CD8-positive, alpha-beta memory T cell (primary cell): ENCODE measurements at regions of chr1 and their contacts with region 1.

Region 1: DNA sequence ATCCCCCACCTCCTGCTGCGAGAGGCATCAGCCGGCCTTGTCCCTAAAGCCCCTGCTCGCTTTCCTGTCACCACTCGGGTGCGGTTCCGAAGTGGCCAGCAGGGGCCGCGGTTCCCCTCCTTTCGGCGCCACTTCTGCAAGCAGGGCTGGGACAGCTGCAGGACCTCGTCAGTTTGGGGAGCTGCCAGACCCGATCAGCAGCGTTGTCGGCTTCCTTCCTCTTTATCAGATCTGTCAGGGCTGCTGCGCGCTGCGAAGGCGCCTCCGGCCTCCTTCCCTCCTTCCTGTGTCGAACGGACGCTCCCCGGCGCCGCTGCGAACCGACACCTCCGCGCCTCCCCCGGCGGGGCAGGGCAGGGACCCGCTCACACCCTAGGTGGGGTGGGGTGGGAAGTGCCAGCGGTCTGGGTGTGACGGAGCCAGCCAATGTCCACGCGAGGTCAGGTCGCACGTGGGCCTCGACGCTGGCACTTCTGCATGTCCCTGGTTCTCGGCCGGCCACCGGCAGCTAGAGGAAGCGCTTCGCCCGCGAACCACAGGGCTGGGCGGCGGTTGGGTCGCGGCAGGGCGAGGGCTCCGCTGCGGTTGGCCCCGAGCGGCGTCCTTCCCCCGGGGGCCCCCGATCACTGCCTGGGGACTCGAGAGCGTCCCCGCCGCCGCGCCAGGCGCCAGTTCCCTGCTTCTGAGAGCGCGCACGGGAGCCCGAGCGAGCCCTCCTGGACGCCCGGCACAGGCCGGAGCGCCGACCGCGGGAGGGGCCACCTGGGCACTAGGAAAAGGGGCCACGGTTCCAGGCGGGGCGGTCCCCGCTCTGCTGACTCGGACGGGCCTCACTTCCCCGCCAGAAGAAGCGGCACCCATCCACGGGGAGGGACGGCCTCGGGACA is 81.8 kb downstream of the RUNX3 start:
- DNase-seq: peak; percentile 82 to 95 (median 86)
- H3K4me3 ChIP-seq: peak overlapping the region; percentile 48
- H3K4me3 Mint-ChIP-seq: peak overlapping the region; percentile 66 to 84 (median 74)
- H3K27ac ChIP-seq: peak overlapping the region; percentile 27
- H3K27ac Mint-ChIP-seq: peak overlapping the region; percentile 73 to 95 (median 82)
- H3K4me1 ChIP-seq: peaks cover 4% of the 10 kb centered on the region
- H3K4me1 Mint-ChIP-seq: peaks cover 24 to 37% (median 25%) of the 10 kb centered on the region in 3 donors
- H3K27me3 ChIP-seq: no peaks in the 10 kb centered on the region
- H3K27me3 Mint-ChIP-seq: peaks cover 0 to 1% of the 10 kb centered on the region in 2 donors

Region 2: GRCh38 chr1:24897767-24898483 is 49.7 kb after region 1 on chr1:
- CTCF ChIA-PET with region 1: interaction called, 30 read pairs
- POLR2A ChIA-PET with region 1: no interaction called
- DNase-seq: peak in 3 of 5 donors; percentile 36 to 60 (median 43)
- H3K4me3 ChIP-seq: no peak overlapping the region
- H3K4me3 Mint-ChIP-seq: peak overlapping the region in 4 of 7 donors; percentile 28 to 68 (median 56)
- H3K27ac ChIP-seq: no peak overlapping the region
- H3K27ac Mint-ChIP-seq: peak overlapping the region; percentile 53 to 94 (median 87)
- H3K4me1 ChIP-seq: peaks cover 30% of the 10 kb centered on the region
- H3K4me1 Mint-ChIP-seq: peaks cover 44 to 60% (median 47%) of the 10 kb centered on the region in 3 donors
- H3K27me3 ChIP-seq: no peaks in the 10 kb centered on the region
- H3K27me3 Mint-ChIP-seq: peaks cover 0 to 4% of the 10 kb centered on the region in 2 donors

Region 3: DNA sequence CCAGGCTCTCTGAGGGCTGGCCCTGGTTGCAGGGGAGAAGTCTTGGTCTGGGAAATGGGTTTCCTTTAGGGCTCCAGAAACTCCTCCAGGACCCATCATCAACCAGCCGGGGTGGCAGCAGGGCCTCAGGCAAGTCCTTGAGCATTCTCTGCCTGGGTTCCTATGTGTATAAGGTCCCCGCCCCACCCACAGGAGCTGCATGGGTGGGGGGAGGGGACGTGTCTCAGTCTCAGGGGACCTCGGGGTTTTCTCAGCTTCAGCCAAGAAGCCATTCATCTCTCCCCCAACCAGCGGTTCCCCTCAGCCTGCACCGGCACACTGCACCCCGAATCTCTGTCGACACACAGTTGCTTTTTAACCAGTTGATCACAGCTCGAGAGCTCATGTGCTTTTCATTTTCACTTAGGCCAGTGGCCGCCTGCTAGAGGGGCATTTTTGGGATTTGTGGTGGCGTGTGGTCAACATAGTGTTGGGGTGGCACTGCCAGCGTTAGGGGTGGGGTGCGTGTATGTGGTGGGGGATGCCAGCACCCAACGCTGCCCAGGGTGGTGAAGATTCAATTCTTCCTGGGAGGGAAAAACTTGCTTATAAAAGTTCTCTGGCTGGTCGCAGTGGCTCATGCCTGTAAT is 75.4 kb after region 1 on chr1:
- CTCF ChIA-PET with region 1: interaction called, 98 read pairs
- POLR2A ChIA-PET with region 1: interaction called, 12 read pairs
- DNase-seq: peak in 2 of 5 donors; percentile 57 to 61
- H3K4me3 ChIP-seq: peak overlapping the region; percentile 25
- H3K4me3 Mint-ChIP-seq: peak overlapping the region; percentile 79 to 99 (median 91)
- H3K27ac ChIP-seq: peak overlapping the region; percentile 64
- H3K27ac Mint-ChIP-seq: peak overlapping the region; percentile 85 to 100 (median 100)
- H3K4me1 ChIP-seq: peaks cover 91% of the 10 kb centered on the region
- H3K4me1 Mint-ChIP-seq: peaks cover 70 to 87% (median 87%) of the 10 kb centered on the region in 3 donors
- H3K27me3 ChIP-seq: no peaks in the 10 kb centered on the region
- H3K27me3 Mint-ChIP-seq: peaks cover 0 to 11% of the 10 kb centered on the region in 2 donors

Region 4: GRCh38 chr1:25099343-25099951 is 251.2 kb after region 1 on chr1:
- CTCF ChIA-PET with region 1: interaction called, 59 read pairs
- POLR2A ChIA-PET with region 1: interaction called, 5 read pairs
- DNase-seq: peak; percentile 22 to 78 (median 44)
- H3K4me3 ChIP-seq: peak overlapping the region; percentile 30
- H3K4me3 Mint-ChIP-seq: peak overlapping the region; percentile 34 to 89 (median 76)
- H3K27ac ChIP-seq: peak overlapping the region; percentile 0
- H3K27ac Mint-ChIP-seq: peak overlapping the region; percentile 25 to 95 (median 90)
- H3K4me1 ChIP-seq: peaks cover 71% of the 10 kb centered on the region
- H3K4me1 Mint-ChIP-seq: peaks cover 71 to 78% (median 75%) of the 10 kb centered on the region in 3 donors
- H3K27me3 ChIP-seq: no peaks in the 10 kb centered on the region
- H3K27me3 Mint-ChIP-seq: no peaks in the 10 kb centered on the region

Region 5: GRCh38 chr1:25198663-25199252 is 350.5 kb after region 1 on chr1:
- CTCF ChIA-PET with region 1: interaction called, 54 read pairs
- POLR2A ChIA-PET with region 1: no interaction called
- DNase-seq: peak in 1 of 5 donors; percentile 18
- H3K4me3 ChIP-seq: no peak overlapping the region
- H3K4me3 Mint-ChIP-seq: peak overlapping the region in 1 of 7 donors; percentile 3
- H3K27ac ChIP-seq: no peak overlapping the region
- H3K27ac Mint-ChIP-seq: peak overlapping the region in 4 of 8 donors; percentile 3 to 84 (median 52)
- H3K4me1 ChIP-seq: peaks cover 5% of the 10 kb centered on the region
- H3K4me1 Mint-ChIP-seq: peaks cover 10 to 12% (median 11%) of the 10 kb centered on the region in 3 donors
- H3K27me3 ChIP-seq: no peaks in the 10 kb centered on the region
- H3K27me3 Mint-ChIP-seq: peaks cover 2 to 16% of the 10 kb centered on the region in 2 donors